MCF 10A (cell line): ENCODE measurements at regions of chr2 and their contacts with region 1.

Region 1: GRCh38 chr2:168246483-168247340 is 683 bp downstream of the STK39 start:
- DNase-seq: peak; percentile 63
- H3K4me3 Mint-ChIP-seq: peak overlapping the region; percentile 79
- H3K27ac Mint-ChIP-seq: peak overlapping the region; percentile 41
- H3K4me1 Mint-ChIP-seq: peaks cover 9% of the 10 kb centered on the region
- H3K27me3 Mint-ChIP-seq: no peaks in the 10 kb centered on the region
- CTCF ChIP-seq: peak; percentile 23

Region 2: GRCh38 chr2:168136392-168136977 is 110.2 kb before region 1 on chr2:
- CTCF ChIA-PET with region 1: interaction called, 3 read pairs
- POLR2A ChIA-PET with region 1: interaction called, 5 read pairs
- intact Hi-C with region 1: loop called (anchors 5 kb)
- DNase-seq: peak; percentile 49
- H3K4me3 Mint-ChIP-seq: no peak overlapping the region
- H3K27ac Mint-ChIP-seq: no peak overlapping the region
- H3K4me1 Mint-ChIP-seq: peaks cover 10% of the 10 kb centered on the region
- H3K27me3 Mint-ChIP-seq: no peaks in the 10 kb centered on the region
- CTCF ChIP-seq: peak; percentile 54

Region 3: GRCh38 chr2:168160897-168161296 is 85.8 kb before region 1 on chr2:
- CTCF ChIA-PET with region 1: no interaction called
- POLR2A ChIA-PET with region 1: no interaction called
- intact Hi-C with region 1: loop called (anchors 2 kb)
- DNase-seq: peak; percentile 35
- H3K4me3 Mint-ChIP-seq: no peak overlapping the region
- H3K27ac Mint-ChIP-seq: no peak overlapping the region
- H3K4me1 Mint-ChIP-seq: peaks cover 7% of the 10 kb centered on the region
- H3K27me3 Mint-ChIP-seq: no peaks in the 10 kb centered on the region
- CTCF ChIP-seq: peak; percentile 32